Posterior cingulate gyrus (tissue), 11 donors: ENCODE measurements at regions of chr15 and their contacts with region 1.

Region 1: DNA sequence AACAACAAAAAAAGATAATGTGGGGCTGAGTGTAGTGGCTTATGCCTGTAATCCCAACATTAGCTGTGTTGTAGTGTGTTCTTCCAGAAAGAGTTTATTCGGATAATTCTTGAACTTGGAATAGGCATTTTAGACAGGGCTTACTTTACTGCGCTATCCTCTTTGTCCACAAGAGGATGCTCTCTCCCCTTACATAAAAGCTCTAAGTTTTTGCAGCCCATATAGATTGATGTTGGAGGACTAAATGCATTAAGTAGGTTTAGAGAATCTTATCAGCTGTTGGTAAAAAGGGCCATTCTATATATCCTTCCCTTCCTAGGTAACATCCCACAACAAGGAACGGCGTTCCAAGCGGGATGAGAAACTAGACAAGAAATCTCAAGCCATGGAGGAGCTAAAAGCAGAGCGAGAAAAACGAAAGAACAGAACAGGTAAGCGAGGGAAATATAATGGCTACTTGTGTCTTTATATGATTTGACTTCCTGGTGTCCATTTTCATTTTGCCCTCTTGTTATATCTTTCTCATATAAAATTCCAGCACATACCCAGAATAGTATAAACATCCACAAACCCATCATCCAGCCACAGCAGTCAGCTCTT is 27.8 kb upstream of the ITPKA start:
- DNase-seq: no peak

Region 2: GRCh38 chr15:41501931-41502794 is 36.2 kb after region 1 on chr15:
- intact Hi-C with region 1: no loop called
- DNase-seq: peak in 1 of 10 donors; percentile 81

Region 3: DNA sequence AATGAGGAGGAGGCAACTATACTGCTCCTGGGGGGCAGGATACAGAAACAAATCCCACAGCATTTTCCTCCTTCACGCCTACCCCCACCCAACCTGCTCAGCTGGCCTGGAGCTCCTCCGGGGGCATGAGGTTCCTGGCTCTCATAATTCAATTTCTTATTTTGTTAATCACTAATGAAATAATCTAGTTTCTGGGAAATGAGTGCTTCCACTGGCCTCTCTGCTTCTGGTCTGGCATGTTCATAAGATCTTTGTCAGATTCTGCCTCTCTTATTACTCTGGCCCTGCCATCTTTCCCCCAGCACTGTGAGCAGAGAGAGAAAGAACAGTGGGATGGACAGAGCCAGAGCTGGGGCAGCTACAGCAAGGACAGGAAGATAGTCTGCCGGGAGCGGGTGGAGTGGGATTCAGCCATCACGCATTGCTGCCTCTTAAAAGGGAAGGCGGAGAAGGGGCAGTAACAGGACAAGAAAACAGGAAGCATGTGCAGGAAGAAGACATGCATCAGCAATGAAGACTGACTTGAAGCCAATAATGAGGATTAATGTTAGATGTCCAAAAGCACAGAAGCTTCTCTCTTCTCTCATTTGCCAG is 64.5 kb after region 1 on chr15:
- intact Hi-C with region 1: no loop called
- DNase-seq: no peak

Region 4: GRCh38 chr15:41543521-41543870 is 77.6 kb after region 1 on chr15:
- intact Hi-C with region 1: no loop called
- DNase-seq: no peak

Region 5: DNA sequence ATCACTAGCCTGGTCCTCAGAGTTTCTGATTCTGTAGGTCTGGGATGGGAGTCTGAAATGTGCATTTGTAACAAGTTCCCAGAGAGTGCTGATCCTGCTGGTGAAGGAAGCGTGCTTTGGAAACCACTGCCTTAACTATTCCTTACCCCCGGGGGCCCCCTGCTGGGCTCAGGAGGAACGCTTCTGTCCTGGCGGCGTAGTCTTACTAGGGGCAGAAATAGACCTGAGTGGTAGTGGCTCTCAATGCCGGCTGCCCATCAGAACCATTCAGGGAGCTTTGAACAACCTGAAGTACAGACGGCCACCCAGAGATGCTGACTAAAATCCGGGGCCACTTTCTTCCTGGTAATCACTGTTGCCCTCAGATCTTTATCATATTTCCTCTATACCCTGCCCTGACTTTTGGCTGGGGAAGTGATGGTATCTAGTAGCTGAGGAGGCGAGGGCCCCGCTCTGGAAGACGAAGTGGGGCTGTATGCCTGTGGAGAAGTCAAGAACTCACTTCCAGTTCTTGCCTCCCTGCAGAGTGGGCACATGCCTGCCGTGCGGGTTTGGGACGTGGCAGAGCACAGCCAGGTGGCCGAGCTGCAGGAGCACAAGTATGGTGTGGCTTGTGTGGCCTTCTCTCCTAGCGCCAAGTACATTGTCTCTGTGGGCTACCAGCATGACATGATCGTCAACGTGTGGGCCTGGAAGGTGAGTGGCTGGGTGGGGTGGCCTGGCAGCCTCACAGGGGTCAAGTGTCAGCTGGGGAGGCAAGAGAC is 345.7 kb after region 1 on chr15:
- intact Hi-C with region 1: loop called (anchors 10 kb)
- DNase-seq: peak; percentile 75 to 98 (median 90)